ENCODE measurements at regions of chr10 and their contacts with region 1.

Region 1: DNA sequence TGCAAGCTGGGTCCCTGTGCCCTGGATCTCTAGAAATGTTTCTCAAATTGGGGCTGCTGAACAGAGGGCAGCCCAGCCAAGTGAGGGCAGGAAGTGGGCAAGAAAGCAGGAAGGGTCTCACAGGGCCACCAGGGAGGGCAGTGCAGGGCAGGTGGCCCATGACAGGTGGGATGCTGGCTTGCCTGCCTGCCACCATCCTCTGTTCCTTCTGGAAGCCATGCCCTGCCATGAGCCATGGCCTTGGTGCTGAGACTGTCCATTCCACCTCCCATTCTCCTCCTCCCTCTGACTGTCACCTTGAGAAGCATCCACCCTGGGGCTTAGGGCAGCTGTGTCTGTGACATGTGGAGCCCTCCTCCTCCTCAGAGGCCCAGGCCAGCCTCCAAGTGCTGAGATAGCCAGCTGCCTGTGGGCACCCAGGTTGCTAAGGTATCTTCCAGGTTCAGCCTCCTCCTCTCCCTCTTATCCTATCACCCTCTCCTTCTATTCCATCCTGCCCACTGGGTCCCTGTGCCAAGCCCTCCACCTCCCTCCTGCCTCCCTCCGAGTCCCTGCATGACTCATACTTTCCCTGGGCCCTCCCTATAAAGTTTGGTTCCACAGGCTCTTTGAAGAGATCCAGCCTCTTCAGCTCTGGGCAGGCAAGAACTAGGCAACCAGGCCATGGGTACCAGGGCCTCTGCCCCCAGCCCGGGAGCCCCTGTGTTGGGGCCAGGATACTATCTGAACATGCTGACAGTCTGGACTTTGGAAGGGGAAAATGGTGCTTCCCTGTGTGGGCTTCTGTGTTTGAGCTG is 1.3 kb downstream of the VSIR start:
- DNase-seq: peak; percentile 82
- H3K4me3 Mint-ChIP-seq: peak overlapping the region; percentile 85
- H3K27ac Mint-ChIP-seq: peak overlapping the region; percentile 96
- H3K4me1 Mint-ChIP-seq: peaks cover 67% of the 10 kb centered on the region
- H3K27me3 Mint-ChIP-seq: no peaks in the 10 kb centered on the region

Region 2: DNA sequence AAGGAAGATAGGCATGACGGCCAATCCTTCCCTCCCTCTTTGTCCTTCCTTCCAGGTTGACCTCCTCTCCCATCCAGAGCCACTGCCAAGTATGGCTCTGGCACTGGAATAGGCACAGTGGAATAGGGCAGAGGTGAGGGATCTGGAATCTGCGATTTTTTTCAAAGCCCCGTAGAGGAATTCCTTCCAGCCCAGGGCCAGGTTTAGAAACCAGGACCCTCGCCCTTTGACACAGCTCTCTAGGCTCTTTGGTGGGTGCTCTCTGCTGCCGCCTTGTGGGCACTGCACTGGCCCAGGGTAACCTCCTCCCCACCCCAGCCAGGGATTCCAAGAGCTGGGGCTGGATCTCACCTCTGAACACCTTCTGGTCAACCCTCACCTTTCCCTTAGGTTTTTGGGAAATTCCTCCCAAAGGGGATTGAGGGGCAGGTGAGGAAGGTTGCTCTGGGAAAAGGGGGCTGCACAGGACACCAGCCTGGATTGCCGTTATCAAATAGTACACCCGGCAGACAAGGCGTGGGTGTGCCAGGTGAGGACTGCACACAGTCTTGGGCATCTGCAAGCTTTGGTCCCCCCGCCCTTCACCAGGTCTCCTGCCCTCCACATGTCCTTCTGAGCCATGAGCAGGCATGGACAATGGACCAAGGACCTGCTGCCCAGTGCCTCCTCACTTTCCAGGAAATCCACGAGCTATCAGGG is 75.2 kb before region 1 on chr10:
- intact Hi-C with region 1: loop called (anchors 2 kb)
- DNase-seq: peak; percentile 90
- H3K4me3 Mint-ChIP-seq: no peak overlapping the region
- H3K27ac Mint-ChIP-seq: no peak overlapping the region
- H3K4me1 Mint-ChIP-seq: peaks cover 39% of the 10 kb centered on the region
- H3K27me3 Mint-ChIP-seq: no peaks in the 10 kb centered on the region

Region 3: DNA sequence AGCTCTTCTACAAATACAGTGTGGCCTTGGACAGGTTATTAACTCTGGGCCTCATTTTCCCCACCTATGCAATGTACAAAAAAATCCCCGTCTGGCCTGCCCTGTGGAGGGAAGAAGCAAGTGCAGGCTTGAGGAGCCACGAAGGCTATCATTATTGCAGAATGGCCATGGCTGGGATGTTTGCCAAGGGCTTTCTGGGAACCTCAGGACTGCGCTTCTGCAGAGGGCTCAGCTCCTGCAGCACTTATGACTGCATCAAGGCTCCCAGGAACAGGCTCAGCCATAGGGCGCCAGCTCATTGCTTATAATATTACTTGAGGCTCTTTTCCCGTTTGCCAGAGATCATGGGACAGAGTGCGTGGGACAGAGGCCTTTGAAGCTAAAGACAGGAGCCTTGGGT is 31.9 kb before region 1 on chr10:
- intact Hi-C with region 1: loop called (anchors 2 kb)
- DNase-seq: no peak
- H3K4me3 Mint-ChIP-seq: no peak overlapping the region
- H3K27ac Mint-ChIP-seq: peak overlapping the region; percentile 86
- H3K4me1 Mint-ChIP-seq: peaks cover 85% of the 10 kb centered on the region
- H3K27me3 Mint-ChIP-seq: no peaks in the 10 kb centered on the region

Region 4: DNA sequence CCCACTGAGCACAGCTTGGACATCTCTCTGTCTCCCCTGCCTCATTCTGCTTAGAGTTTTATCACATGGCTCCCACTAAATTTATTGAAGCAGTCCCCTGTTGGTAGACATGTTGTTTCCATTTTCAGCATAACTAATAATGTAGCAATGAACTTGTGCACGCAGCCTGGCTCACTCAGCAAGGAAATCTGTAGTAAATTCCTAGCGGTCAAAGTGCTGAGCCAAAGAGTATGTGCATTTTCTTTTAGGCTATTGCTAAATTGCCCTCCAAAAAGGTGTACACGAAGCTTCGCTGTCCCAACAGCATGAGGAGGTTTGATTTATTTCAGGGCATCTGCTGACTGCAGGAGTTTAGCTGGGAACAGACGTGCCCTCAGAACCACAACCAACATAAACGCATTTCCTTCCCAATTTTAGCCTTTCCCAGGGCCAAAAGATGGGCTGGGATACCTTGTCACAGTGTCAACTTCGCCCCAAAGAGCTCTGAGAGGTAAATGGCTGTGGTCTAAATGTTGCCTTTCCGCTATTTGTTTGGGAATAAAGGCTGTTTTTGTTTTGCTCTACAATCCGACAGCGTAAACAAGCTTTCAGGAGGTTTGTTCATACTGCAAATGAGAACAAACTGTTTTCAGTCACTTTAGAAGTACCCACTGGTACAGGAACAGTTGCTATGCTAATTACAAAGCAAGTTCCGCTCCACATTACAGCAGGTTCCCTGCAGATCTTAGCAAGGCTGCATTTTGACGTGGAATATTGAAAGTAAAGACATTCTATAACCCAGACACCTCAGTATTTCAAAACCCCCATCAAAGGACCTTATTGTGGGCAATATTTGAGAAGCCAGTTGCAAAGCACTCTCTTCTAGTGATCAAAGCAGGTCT is 15.5 kb before region 1 on chr10:
- intact Hi-C with region 1: loop called (anchors 1 kb)
- DNase-seq: peak; percentile 82
- H3K4me3 Mint-ChIP-seq: peak overlapping the region; percentile 74
- H3K27ac Mint-ChIP-seq: peak overlapping the region; percentile 92
- H3K4me1 Mint-ChIP-seq: peaks cover 74% of the 10 kb centered on the region
- H3K27me3 Mint-ChIP-seq: no peaks in the 10 kb centered on the region